K562 (cell line): ENCODE measurements at regions of chr6 and their contacts with region 1.

Region 1: GRCh38 chr6:87483929-87484328 is 11.2 kb downstream of the SLC35A1 start:
- DNase-seq: peak; percentile 13 to 52 (median 26)
- ATAC-seq: peak; percentile 92
- H3K4me3 ChIP-seq: no peak overlapping the region
- H3K27ac ChIP-seq: no peak overlapping the region
- H3K4me1 ChIP-seq: no peaks in the 10 kb centered on the region
- H3K27me3 ChIP-seq: no peaks in the 10 kb centered on the region
- CTCF ChIP-seq: peak; percentile 51 to 55 (median 52); a peak in 5 of 6 replicates
- EP300 ChIP-seq: no peak
- POLR2A ChIP-seq: no peak
- RAD21 ChIP-seq: peak in 1 of 2 experiments; percentile 24; a peak in 1 of 4 replicates

Region 2: GRCh38 chr6:87421575-87421974 is 62.4 kb before region 1 on chr6:
- CTCF ChIA-PET with region 1: no interaction called
- POLR2A ChIA-PET with region 1: no interaction called
- in situ Hi-C with region 1: no loop called
- intact Hi-C with region 1: no loop called
- DNase-seq: no peak
- ATAC-seq: no peak
- H3K4me3 ChIP-seq: no peak overlapping the region
- H3K27ac ChIP-seq: no peak overlapping the region
- H3K4me1 ChIP-seq: no peaks in the 10 kb centered on the region
- H3K27me3 ChIP-seq: no peaks in the 10 kb centered on the region
- CTCF ChIP-seq: no peak
- EP300 ChIP-seq: no peak
- POLR2A ChIP-seq: no peak
- RAD21 ChIP-seq: no peak

Region 3: GRCh38 chr6:87799651-87800050 is 315.7 kb after region 1 on chr6:
- CTCF ChIA-PET with region 1: no interaction called
- POLR2A ChIA-PET with region 1: no interaction called
- in situ Hi-C with region 1: no loop called
- intact Hi-C with region 1: loop called (anchors 10 kb)
- DNase-seq: no peak
- ATAC-seq: no peak
- H3K4me3 ChIP-seq: no peak overlapping the region
- H3K27ac ChIP-seq: no peak overlapping the region
- H3K4me1 ChIP-seq: no peaks in the 10 kb centered on the region
- H3K27me3 ChIP-seq: peaks cover 18 to 26% of the 10 kb centered on the region in 2 experiments
- CTCF ChIP-seq: no peak
- EP300 ChIP-seq: no peak
- POLR2A ChIP-seq: no peak
- RAD21 ChIP-seq: no peak